ENCODE measurements at regions of chrX and their contacts with region 1.

Region 1: DNA sequence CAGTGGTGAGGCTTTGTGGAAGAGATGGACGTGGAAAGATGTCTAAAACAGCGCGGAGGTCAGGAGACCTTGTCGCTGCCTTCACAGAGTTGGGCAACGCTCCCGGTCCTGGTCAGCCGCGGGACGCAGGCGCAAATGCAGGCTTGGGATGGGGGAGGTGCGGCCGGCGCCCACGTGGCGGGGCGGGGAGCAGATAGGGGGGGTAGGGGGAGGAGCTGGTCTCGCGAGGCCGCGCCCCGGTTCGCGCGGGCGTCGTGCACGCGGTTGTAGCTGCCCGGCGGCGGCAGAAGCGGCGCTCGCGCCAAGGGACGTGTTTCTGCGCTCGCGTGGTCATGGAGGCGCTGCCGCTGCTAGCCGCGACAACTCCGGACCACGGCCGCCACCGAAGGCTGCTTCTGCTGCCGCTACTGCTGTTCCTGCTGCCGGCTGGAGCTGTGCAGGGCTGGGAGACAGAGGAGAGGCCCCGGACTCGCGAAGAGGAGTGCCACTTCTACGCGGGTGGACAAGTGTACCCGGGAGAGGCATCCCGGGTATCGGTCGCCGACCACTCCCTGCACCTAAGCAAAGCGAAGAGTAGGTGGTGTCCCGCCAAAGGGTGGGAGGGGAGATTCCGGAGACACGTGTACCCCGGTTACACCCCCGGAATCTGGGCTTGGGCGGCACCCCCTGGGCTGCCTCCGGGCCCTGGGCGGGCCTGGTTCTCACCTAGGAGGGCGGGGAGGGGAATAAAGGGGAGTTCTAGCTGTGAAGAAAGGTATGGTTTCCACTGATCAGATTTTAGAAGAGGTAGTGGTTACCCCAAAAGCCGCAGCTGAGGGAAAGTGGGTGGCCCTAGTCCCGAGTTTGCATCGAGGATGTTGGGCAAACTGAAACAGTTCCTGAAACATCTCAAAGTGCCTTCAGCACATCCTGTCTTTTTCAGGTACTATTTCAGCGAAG is at the start of gene PRDX4:
- DNase-seq: peak; percentile 91
- H3K4me3 Mint-ChIP-seq: peak within 1 kb of the TSS; percentile 89
- H3K27ac Mint-ChIP-seq: peak within 1 kb of the TSS; percentile 93
- H3K4me1 Mint-ChIP-seq: peaks cover 16% of the 10 kb centered on the region
- H3K27me3 Mint-ChIP-seq: no peaks in the 10 kb centered on the region
- total RNA-seq, gene PRDX4: 76.4 and 80.3 TPM in 2 replicates

Region 2: DNA sequence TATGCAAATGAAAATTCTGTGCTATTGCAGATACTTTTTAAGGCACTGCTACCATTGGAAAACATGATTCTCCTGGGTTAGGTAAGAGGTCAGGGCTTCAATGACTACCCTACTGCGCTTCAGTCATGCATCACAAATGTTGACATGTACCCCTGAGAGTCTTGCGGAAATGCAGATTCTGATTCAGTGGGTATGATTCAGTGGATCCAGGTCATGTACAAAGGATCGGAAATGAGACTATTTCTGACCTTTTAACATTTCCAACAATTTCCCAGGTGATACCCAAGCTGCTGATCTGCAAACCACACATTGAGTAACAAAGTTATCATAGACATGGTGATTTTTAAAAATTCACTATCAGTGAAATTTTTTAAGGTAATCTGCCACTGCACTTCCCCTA is 605.1 kb before region 1 on chrX:
- intact Hi-C with region 1: no loop called
- DNase-seq: no peak
- H3K4me3 Mint-ChIP-seq: no peak overlapping the region
- H3K27ac Mint-ChIP-seq: no peak overlapping the region
- H3K4me1 Mint-ChIP-seq: no peaks in the 10 kb centered on the region
- H3K27me3 Mint-ChIP-seq: no peaks in the 10 kb centered on the region

Region 3: GRCh38 chrX:23732704-23733103 is 65.2 kb after region 1 on chrX:
- intact Hi-C with region 1: loop called (anchors 5 kb)
- DNase-seq: peak; percentile 61
- H3K4me3 Mint-ChIP-seq: peak overlapping the region; percentile 59
- H3K27ac Mint-ChIP-seq: peak overlapping the region; percentile 89
- H3K4me1 Mint-ChIP-seq: peaks cover 20% of the 10 kb centered on the region
- H3K27me3 Mint-ChIP-seq: no peaks in the 10 kb centered on the region

Region 4: GRCh38 chrX:23832721-23833120 is 165.2 kb after region 1 on chrX:
- intact Hi-C with region 1: no loop called
- DNase-seq: no peak
- H3K4me3 Mint-ChIP-seq: no peak overlapping the region
- H3K27ac Mint-ChIP-seq: no peak overlapping the region
- H3K4me1 Mint-ChIP-seq: no peaks in the 10 kb centered on the region
- H3K27me3 Mint-ChIP-seq: no peaks in the 10 kb centered on the region

Region 5: GRCh38 chrX:23907498-23908218 is 240.2 kb after region 1 on chrX and contains the starts of genes APOO and CXorf58:
- intact Hi-C with region 1: loop called (anchors 1 kb)
- DNase-seq: peak; percentile 97
- H3K4me3 Mint-ChIP-seq: peak within 1 kb of the TSS; percentile 82
- H3K27ac Mint-ChIP-seq: peak within 1 kb of the TSS; percentile 88
- H3K4me1 Mint-ChIP-seq: peaks cover 17% of the 10 kb centered on the region
- H3K27me3 Mint-ChIP-seq: no peaks in the 10 kb centered on the region
- total RNA-seq, gene APOO: 27.1 and 33.7 TPM in 2 replicates
- total RNA-seq, gene CXorf58: not detected in 2 replicates

Region 6: DNA sequence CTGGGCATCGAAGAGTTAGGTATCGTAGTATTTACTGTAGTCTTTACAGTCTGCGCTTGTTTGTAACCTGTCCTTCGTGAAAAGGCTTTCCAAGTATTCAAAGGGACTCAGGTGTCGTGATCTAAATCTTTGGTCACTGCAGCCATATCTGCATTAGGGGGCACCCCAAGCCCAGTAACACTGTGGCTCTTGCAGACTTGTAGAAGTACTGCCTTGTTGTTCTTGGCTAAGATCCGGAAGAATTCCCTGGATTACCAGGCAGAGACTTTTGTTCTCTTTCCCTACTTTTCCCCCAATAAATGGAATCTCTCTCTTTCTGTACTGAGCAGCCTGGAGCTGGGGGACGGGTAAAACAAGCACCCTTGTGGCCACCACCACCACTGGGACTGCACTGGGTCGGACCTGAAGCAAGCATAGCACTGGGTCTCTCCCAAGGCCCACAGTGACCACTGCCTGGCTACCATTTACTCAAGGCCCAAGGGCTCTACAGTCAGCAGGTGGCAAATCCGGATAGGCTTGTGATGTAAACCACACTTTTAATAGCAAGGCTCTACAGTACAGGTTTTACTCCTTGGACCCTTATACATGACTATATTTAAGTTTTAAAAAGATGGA is 252.3 kb after region 1 on chrX:
- intact Hi-C with region 1: no loop called
- DNase-seq: no peak
- H3K4me3 Mint-ChIP-seq: no peak overlapping the region
- H3K27ac Mint-ChIP-seq: no peak overlapping the region
- H3K4me1 Mint-ChIP-seq: peaks cover 2% of the 10 kb centered on the region
- H3K27me3 Mint-ChIP-seq: no peaks in the 10 kb centered on the region

Region 7: DNA sequence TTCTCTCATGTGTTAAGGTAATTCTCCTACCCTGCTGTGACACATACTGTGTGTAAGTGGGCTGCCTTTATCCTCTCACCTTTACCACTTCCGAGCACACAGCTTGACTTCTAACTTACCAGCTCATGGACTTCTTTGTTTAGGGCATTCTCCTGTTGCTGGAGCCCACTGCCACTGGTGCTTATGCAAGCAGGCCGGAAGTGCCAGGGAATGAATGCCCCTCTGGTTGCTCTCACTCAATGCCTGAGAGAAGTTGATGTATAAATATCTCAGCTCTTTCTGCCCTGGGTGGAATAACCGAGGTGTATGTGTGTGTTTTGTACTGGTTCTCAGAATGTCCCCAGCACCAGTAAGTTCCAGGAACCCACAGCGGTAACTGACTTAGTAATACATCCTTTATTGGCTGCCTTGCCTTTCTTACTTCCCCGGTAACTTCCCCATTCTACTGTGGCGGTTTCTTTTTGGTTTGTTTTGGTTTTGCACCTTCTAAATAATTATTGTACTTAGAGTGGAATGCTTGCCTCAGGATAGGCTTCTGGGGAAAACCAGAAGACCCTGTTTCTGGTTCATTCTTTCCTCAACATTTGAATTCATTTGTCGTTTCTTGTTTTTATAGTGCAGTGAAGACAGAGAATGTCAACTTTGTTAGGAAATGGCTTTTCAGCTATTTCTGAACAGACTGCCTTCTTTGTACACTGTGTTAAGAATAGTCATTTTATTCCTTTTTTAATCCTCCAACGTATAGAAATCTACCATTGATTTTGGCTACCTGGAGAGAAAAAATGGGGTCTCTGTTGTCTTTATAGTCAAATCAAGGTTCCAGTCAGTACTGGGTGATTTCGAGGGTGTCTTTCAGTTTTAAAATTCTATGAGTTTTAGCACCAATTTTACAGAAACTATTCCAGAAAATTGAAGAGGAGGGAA is 285.7 kb after region 1 on chrX:
- intact Hi-C with region 1: loop called (anchors 1 kb)
- DNase-seq: peak; percentile 83
- H3K4me3 Mint-ChIP-seq: peak overlapping the region; percentile 89
- H3K27ac Mint-ChIP-seq: peak overlapping the region; percentile 97
- H3K4me1 Mint-ChIP-seq: peaks cover 12% of the 10 kb centered on the region
- H3K27me3 Mint-ChIP-seq: no peaks in the 10 kb centered on the region

Region 8: DNA sequence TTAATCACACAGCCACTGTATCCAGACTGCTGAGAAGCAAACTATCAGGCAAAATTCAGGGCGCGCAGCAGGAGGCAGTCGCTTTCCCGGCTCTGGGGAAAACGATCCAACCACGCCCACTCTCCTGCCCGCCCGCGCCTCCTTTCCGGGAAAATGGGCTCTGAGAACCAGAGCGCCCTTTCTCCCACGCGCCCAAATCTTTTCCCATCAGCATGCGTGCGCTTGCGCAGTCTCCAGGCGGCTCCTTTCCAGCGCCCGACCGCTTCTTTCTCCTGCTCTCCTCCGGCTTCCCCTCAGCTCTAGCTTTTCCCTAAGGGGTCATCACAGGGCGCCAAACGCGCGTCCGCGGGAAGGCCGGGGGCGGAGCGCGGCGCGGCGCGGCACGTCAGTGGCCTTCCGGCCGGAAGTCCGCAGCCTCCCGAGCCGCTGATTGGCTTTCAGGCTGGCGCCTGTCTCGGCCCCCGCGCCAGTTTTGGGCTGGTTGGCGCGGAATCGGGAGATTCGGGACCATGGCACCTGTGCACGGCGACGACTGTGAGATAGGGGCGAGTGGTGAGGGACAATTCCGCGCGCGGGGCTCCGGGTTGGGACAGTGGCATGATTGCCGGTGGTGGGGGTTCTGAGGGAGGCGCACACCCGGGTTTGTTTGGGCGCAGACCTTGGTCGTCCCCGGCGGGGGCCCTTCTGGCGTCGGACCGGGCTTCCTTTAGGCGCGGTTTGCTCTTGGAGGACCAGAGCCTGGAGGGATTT is 1026.1 kb after region 1 on chrX and contains the start of gene POLA1:
- intact Hi-C with region 1: loop called (anchors 10 kb)
- DNase-seq: peak; percentile 94
- H3K4me3 Mint-ChIP-seq: peak within 1 kb of the TSS; percentile 91
- H3K27ac Mint-ChIP-seq: peak within 1 kb of the TSS; percentile 91
- H3K4me1 Mint-ChIP-seq: peaks cover 15% of the 10 kb centered on the region
- H3K27me3 Mint-ChIP-seq: peaks cover 2% of the 10 kb centered on the region
- total RNA-seq, gene POLA1: 41.3 and 42.6 TPM in 2 replicates